Activated T-helper 1 cell treated with anti-CD3 and anti-CD28 coated beads, Interleukin-12 subunit alpha, Interleukin-12 subunit beta, Interleukin-2, Interleukin-4 antibody, amounts not matched to agents 30 ng/mL and 10 ng/mL and 1 ng/mL, durations not matched to agents 14 hours and 24 hours and 36 hours (primary cell): ENCODE measurements at regions of chr7 and their contacts with region 1.

Region 1: GRCh38 chr7:99325545-99326407 is at the start of gene ARPC1A:
- DNase-seq: peak; percentile 94
- H3K4me3 Mint-ChIP-seq: peak within 1 kb of the TSS; percentile 93
- H3K27ac Mint-ChIP-seq: peak within 1 kb of the TSS; percentile 79
- H3K4me1 Mint-ChIP-seq: peaks cover 37% of the 10 kb centered on the region
- H3K27me3 Mint-ChIP-seq: peaks cover 4% of the 10 kb centered on the region
- total RNA-seq, gene ARPC1A: 72.4 and 75.9 TPM in 2 replicates

Region 2: DNA sequence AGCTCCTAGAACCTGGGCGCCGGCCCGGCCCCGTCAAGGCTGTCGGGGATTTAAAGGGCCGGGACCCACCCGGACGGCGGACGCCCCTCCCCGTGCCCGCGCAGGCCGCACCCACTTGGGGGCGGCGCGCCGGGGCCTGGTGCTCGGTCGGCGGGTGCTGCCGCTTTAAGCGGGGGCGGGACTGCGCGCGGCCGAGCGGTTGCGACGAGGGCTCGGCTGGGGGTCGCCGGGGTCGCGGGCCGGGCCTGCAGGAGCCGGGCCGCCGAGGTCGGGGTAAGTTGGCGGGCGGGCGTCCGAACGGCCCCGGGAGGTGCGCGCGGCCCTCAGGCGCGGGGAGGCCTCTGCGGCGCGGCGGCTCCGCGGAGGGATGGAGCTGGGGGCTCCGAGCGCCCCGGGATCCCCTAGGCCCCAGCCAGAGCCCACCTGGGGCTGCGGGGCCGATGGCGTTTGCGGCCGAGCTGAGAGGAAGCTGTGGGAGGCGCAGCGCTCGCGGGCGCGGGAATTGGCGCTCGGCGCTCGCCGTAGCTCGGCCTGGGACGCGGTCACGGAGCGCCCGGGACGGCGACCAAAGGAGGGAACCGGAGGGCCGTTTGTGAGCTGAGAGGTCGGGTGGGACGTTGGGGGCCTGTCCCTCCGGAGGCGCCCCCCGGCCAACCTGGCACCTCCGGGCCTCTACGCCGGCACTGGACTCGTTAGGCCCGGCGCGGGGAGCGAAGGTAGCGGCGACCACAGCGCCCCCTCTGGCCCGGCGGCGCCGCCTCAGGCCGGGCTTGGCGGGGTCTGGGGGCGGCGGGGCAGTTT is 447.2 kb before region 1 on chr7 and contains the start of gene TRRAP:
- intact Hi-C with region 1: loop called (anchors 5 kb)
- DNase-seq: peak; percentile 70
- H3K4me3 Mint-ChIP-seq: peak within 1 kb of the TSS; percentile 95
- H3K27ac Mint-ChIP-seq: peak within 1 kb of the TSS; percentile 92
- H3K4me1 Mint-ChIP-seq: peaks cover 13% of the 10 kb centered on the region
- H3K27me3 Mint-ChIP-seq: peaks cover 10% of the 10 kb centered on the region
- total RNA-seq, gene TRRAP: 66.9 and 69.6 TPM in 2 replicates

Region 3: DNA sequence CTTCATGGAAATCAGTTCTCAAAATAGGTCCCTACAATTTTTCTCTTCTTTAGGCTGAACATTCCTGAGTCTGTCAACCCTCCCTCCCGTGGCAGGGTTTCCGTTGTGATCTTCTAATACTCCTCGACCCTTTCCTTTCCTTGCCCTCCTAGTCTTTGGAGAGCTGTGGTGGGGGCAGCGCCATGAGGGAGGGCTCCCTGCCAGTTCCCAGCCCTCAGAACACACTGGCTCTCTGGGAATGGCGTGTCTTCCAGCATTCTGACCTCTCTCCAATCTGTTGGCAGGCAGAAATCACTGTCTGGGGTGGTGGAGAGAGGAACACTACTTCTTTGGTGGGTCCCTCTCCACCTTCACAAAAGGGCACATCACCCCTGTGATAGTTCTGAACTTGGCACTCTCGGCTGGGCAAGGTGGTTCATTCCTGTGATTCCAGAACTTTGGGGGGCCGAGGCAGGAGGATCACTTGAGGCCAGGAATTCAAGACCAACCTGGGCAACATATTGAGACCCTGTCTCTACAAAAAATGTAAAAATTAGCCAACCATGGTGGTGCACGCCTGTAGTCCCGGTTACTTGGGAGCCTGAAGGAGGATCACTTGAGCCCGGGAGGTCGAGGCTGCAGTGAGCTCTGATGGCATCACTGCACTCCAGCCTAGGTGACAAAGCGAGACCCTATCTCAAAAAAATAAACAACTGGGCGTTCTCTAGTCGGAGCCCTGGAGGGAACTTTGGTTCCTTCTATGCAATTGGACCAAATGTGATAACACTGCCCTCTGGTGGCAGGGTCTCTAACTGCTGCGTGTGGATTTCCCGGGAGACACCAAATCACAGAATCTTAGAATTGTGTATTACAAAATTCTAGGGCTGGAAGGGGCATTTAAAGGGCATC is 13.2 kb before region 1 on chr7:
- intact Hi-C with region 1: loop called (anchors 1 kb)
- DNase-seq: peak; percentile 53
- H3K4me3 Mint-ChIP-seq: no peak overlapping the region
- H3K27ac Mint-ChIP-seq: no peak overlapping the region
- H3K4me1 Mint-ChIP-seq: peaks cover 21% of the 10 kb centered on the region
- H3K27me3 Mint-ChIP-seq: peaks cover 21% of the 10 kb centered on the region

Region 4: GRCh38 chr7:99374103-99375064 is 48.6 kb after region 1 on chr7 and contains the start of gene ARPC1B:
- intact Hi-C with region 1: loop called (anchors 1 kb)
- DNase-seq: peak; percentile 77
- H3K4me3 Mint-ChIP-seq: peak within 1 kb of the TSS; percentile 86
- H3K27ac Mint-ChIP-seq: peak within 1 kb of the TSS; percentile 72
- H3K4me1 Mint-ChIP-seq: peaks cover 15% of the 10 kb centered on the region
- H3K27me3 Mint-ChIP-seq: no peaks in the 10 kb centered on the region
- total RNA-seq, gene ARPC1B: 254 and 256 TPM in 2 replicates